ENCODE measurements at regions of chr10 and their contacts with region 1.

Region 1: GRCh38 chr10:73879296-73880173 is 5.2 kb upstream of the CAMK2G start:
- DNase-seq: peak; percentile 81 to 87
- H3K4me3 ChIP-seq: no peak overlapping the region
- H3K27ac ChIP-seq: no peak overlapping the region
- H3K4me1 ChIP-seq: peaks cover 3 to 13% of the 10 kb centered on the region in 2 donors
- H3K27me3 ChIP-seq: no peaks in the 10 kb centered on the region
- CTCF ChIP-seq: peak; percentile 77 to 96 (median 91)
- POLR2A ChIP-seq: no peak

Region 2: GRCh38 chr10:73798927-73799563 is 80.5 kb before region 1 on chr10:
- intact Hi-C with region 1: no loop called
- DNase-seq: no peak
- H3K4me3 ChIP-seq: no peak overlapping the region
- H3K27ac ChIP-seq: no peak overlapping the region
- H3K4me1 ChIP-seq: no peaks in the 10 kb centered on the region
- H3K27me3 ChIP-seq: no peaks in the 10 kb centered on the region
- CTCF ChIP-seq: no peak
- POLR2A ChIP-seq: no peak

Region 3: GRCh38 chr10:73810735-73811465 is 68.6 kb before region 1 on chr10:
- intact Hi-C with region 1: loop called (anchors 10 kb)
- DNase-seq: peak; percentile 24 to 30
- H3K4me3 ChIP-seq: peak overlapping the region; percentile 71 to 92 (median 88)
- H3K27ac ChIP-seq: peak overlapping the region; percentile 63 to 85 (median 78)
- H3K4me1 ChIP-seq: peaks cover 7 to 20% of the 10 kb centered on the region in 2 donors
- H3K27me3 ChIP-seq: no peaks in the 10 kb centered on the region
- CTCF ChIP-seq: no peak
- POLR2A ChIP-seq: no peak

Region 4: GRCh38 chr10:73848821-73849489 is 30.6 kb before region 1 on chr10:
- intact Hi-C with region 1: loop called (anchors 2 kb)
- DNase-seq: peak; percentile 81 to 83
- H3K4me3 ChIP-seq: no peak overlapping the region
- H3K27ac ChIP-seq: no peak overlapping the region
- H3K4me1 ChIP-seq: peaks cover 4 to 8% of the 10 kb centered on the region in 2 donors
- H3K27me3 ChIP-seq: no peaks in the 10 kb centered on the region
- CTCF ChIP-seq: peak; percentile 93 to 99 (median 97)
- POLR2A ChIP-seq: no peak

Region 5: GRCh38 chr10:74078037-74078436 is 198.5 kb after region 1 on chr10:
- intact Hi-C with region 1: loop called (anchors 10 kb)
- DNase-seq: no peak
- H3K4me3 ChIP-seq: no peak overlapping the region
- H3K27ac ChIP-seq: no peak overlapping the region
- H3K4me1 ChIP-seq: no peaks in the 10 kb centered on the region
- H3K27me3 ChIP-seq: no peaks in the 10 kb centered on the region
- CTCF ChIP-seq: no peak
- POLR2A ChIP-seq: no peak

Measured in thyroid gland (tissue), 4 donors.